ENCODE measurements at regions of chr5 and their contacts with region 1.

Region 1: GRCh38 chr5:76256116-76256889 is 146.8 kb upstream of the IQGAP2 start:
- DNase-seq: peak; percentile 62
- H3K4me3 ChIP-seq: no peak overlapping the region
- H3K27ac ChIP-seq: no peak overlapping the region
- H3K4me1 ChIP-seq: no peaks in the 10 kb centered on the region
- H3K27me3 ChIP-seq: peaks cover 8% of the 10 kb centered on the region
- CTCF ChIP-seq: peak; percentile 72 to 83

Region 2: DNA sequence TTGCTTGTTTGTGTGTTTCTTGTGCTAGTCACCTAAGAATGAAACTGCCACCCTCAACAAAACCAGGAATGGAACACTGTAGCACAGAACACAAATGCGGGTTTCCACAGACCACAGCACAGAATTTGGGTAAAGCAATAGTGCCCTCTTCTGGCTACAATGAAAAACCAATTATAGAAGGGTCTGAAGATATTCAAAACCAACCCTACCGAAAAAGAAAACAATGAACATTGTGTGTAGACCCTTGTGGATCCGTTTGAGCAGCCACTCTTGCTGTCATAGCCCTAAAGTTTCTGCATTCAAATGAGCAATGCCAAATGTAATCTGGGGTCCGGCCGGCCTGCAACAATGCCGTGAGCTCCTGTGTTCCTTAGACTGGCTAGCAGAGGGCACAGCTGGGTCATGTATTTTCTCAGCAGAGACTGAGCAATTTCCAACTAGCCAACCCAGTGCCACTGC is 1607.4 kb before region 1 on chr5:
- CTCF ChIA-PET with region 1: no interaction called
- dilution Hi-C with region 1: no loop called
- in situ Hi-C with region 1: no loop called
- intact Hi-C with region 1: loop called (anchors 10 kb)
- DNase-seq: no peak
- H3K4me3 ChIP-seq: no peak overlapping the region
- H3K27ac ChIP-seq: no peak overlapping the region
- H3K4me1 ChIP-seq: peaks cover 55% of the 10 kb centered on the region
- H3K27me3 ChIP-seq: no peaks in the 10 kb centered on the region
- CTCF ChIP-seq: peak; percentile 65 to 66

Region 3: DNA sequence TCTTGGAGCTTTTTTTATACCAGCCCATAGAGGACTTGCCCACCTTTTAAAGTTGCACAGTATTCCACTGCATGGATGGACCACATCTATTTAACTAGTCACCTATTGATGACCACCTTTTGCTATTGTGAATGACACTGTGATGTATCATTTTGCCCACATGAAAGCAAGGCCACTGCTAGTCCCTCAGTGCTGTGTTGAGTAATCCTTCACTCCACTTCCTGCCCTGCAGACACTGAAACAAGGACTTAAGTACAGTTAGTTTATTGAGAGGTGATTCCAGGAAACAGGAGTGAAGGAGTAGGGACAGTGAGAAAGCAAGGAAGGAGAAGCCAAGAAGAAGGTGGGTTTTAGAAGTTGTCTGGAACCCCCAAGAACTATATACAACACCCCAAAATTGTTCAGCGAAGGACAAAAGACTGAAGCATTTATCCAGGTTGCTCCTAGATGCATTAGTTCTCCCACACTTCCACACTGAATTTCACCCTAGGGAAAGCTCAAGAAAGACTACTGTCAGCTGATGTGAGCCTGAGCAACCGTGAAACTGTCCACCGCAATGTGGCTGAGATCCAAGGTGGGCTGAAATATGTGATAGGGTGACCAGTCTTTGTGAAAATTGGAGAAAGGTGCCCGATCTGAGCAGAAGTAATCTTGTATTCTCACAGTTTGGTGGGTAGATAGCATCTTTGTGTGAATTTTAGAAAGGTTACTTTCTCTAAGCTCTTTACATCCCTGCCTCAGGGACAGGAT is 974.4 kb before region 1 on chr5:
- CTCF ChIA-PET with region 1: no interaction called
- dilution Hi-C with region 1: no loop called
- in situ Hi-C with region 1: no loop called
- intact Hi-C with region 1: loop called (anchors 5 kb)
- DNase-seq: peak; percentile 56
- H3K4me3 ChIP-seq: no peak overlapping the region
- H3K27ac ChIP-seq: no peak overlapping the region
- H3K4me1 ChIP-seq: peaks cover 5% of the 10 kb centered on the region
- H3K27me3 ChIP-seq: no peaks in the 10 kb centered on the region
- CTCF ChIP-seq: no peak

Region 4: DNA sequence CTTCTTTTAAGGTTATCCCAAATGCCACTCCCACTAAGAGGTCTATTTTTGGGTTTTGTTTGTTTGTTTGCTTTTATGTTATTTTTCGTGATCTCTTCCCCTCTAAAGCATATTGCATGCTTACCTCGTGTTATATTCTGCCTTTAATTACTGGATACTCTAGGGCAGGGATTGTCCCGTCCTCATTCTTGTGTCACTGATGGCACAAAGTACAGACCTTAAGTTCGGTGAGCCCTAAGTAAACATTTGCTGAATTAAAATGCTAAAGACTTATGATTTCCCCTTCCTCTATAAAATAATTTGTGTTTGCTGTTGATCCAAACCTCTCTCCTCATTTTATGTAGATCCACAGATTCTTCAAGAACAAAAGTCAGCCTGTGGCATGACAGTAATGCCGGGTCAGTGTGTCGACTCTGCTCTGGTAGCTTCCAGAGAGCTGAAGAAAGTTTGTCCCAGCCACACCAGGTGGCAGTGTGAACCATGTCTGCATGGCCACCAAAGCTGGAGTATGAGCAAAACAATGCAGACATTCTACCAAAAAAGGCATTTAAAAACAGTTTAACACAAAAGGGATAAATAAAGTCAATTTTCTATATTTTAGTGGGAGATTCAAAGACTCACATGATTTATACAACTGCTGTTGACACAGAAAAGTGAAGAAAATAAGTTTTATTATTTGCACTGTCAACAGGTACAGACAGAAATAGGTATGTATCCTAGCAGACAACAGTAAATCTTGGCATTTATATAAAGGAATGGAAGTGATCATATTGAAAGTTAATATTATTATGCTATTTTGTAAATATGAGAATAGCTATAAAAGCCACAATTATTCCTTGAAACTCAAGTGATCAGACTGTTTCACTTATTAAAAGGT is 521.2 kb before region 1 on chr5:
- CTCF ChIA-PET with region 1: no interaction called
- dilution Hi-C with region 1: no loop called
- in situ Hi-C with region 1: loop called (anchors 25 kb)
- intact Hi-C with region 1: loop called (anchors 1 kb)
- DNase-seq: peak; percentile 16
- H3K4me3 ChIP-seq: no peak overlapping the region
- H3K27ac ChIP-seq: no peak overlapping the region
- H3K4me1 ChIP-seq: no peaks in the 10 kb centered on the region
- H3K27me3 ChIP-seq: no peaks in the 10 kb centered on the region
- CTCF ChIP-seq: peak; percentile 56 to 81

Region 5: DNA sequence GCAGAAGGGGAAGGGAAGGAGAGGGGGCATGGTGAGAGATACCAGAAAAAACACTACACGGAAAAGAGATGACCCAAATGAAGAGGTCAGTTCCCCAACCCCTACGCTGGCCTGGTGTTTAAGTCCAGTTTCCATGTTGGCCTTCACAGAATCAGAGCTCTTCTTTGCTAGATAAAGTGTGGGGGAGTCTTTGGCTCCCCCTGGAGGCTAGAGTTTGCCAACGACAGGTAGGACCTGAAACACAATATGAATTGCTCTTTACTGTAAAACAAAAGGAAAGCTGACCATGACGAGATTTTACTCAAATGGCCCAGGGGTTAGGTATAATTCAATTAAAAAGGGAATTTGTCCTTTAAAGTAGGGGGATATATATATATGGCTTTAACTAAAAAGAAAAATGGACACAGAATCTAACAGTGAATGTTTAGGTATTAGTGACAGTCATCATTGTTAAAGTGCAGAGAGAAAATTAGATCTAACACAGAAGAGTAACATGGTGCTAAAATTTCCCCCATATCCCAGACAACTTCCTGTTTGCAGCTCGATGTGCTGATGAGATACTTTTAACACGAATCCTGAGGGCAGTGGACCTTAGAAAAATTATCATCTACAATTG is 81.1 kb before region 1 on chr5:
- CTCF ChIA-PET with region 1: interaction called, 4 read pairs
- dilution Hi-C with region 1: no loop called
- in situ Hi-C with region 1: no loop called
- intact Hi-C with region 1: loop called (anchors 2 kb)
- DNase-seq: peak; percentile 34
- H3K4me3 ChIP-seq: no peak overlapping the region
- H3K27ac ChIP-seq: no peak overlapping the region
- H3K4me1 ChIP-seq: no peaks in the 10 kb centered on the region
- H3K27me3 ChIP-seq: no peaks in the 10 kb centered on the region
- CTCF ChIP-seq: peak; percentile 91 to 95

Region 6: GRCh38 chr5:76337953-76338451 is 81.7 kb after region 1 on chr5:
- CTCF ChIA-PET with region 1: no interaction called
- dilution Hi-C with region 1: no loop called
- in situ Hi-C with region 1: no loop called
- intact Hi-C with region 1: no loop called
- DNase-seq: peak; percentile 75
- H3K4me3 ChIP-seq: no peak overlapping the region
- H3K27ac ChIP-seq: no peak overlapping the region
- H3K4me1 ChIP-seq: peaks cover 4% of the 10 kb centered on the region
- H3K27me3 ChIP-seq: no peaks in the 10 kb centered on the region
- CTCF ChIP-seq: peak; percentile 67 to 69